AG04449 (cell line): ENCODE measurements at regions of chr17 and their contacts with region 1.

Region 1: GRCh38 chr17:79087428-79088143 is 13.0 kb downstream of the ENGASE start:
- DNase-seq: no peak
- H3K4me3 ChIP-seq: no peak overlapping the region
- CTCF ChIP-seq: peak; percentile 93

Region 2: GRCh38 chr17:79019632-79020584 is 67.7 kb before region 1 on chr17:
- CTCF ChIA-PET with region 1: interaction called, 105 read pairs
- POLR2A ChIA-PET with region 1: no interaction called
- DNase-seq: no peak
- H3K4me3 ChIP-seq: no peak overlapping the region
- CTCF ChIP-seq: peak; percentile 35

Region 3: DNA sequence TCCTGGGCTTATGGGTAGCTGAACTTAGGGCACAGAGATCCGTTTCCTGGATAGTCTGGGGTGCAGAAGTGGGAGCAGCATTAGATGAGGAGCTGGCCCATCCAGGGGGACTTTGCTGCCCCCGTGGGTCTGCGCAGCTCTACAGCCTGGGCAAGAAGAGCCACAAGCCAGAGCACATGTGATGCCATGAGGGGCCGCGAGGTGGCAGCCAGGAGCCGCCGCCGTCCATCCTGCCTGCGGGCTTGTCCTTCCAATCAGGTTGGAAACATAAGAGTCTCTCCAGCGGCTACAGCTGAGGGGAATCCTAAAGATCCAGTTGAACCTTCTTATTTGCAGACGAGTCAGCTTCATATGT is 41.8 kb before region 1 on chr17:
- CTCF ChIA-PET with region 1: interaction called, 80 read pairs
- POLR2A ChIA-PET with region 1: no interaction called
- DNase-seq: no peak
- H3K4me3 ChIP-seq: no peak overlapping the region
- CTCF ChIP-seq: peak; percentile 98

Region 4: DNA sequence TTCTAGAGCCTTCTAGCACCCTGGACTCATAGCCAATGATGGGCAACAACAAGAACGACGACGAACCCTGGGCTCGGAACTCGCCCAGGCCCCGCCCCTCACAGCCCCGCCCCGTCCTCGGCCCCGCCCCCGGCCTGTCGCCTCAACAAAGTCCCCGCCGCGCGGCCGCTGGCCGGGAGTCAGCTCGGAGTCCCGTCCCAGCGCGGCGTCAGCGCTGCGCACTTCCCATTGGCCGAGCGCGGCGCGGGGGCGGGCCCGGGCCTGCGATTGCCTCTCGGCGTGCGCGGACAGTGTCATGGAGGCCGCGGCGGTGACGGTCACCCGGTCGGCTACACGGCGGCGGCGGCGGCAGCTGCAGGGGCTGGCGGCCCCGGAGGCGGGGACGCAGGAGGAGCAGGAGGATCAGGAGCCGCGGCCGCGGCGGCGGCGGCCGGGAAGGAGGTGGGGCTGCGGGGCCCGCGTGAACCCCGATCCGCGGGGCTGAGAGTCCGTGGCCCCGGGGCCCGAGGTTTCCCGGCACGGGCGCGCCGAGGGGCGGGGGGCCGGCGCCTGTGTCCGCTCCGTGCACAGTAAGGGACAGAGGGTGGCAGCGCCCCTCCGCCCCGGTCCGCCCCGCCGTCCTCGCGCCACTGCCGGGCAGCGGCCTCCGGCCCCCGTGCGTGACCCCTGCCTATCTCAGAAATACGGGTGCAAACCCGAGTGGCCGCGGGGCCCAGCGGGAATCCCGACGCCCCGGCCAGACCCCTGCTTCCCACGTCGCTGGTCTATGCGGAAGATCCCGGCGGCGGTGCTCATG is 12.7 kb before region 1 on chr17 and contains the start of gene ENGASE:
- CTCF ChIA-PET with region 1: interaction called, 54 read pairs
- POLR2A ChIA-PET with region 1: no interaction called
- DNase-seq: peak; percentile 14
- H3K4me3 ChIP-seq: peak within 1 kb of the TSS; percentile 65
- CTCF ChIP-seq: no peak

Region 5: GRCh38 chr17:79382322-79382721 is 294.7 kb after region 1 on chr17:
- CTCF ChIA-PET with region 1: interaction called, 473 read pairs
- POLR2A ChIA-PET with region 1: no interaction called
- DNase-seq: no peak
- H3K4me3 ChIP-seq: no peak overlapping the region
- CTCF ChIP-seq: no peak

Region 6: GRCh38 chr17:79707931-79708891 is 620.6 kb after region 1 on chr17:
- CTCF ChIA-PET with region 1: interaction called, 18 read pairs
- POLR2A ChIA-PET with region 1: no interaction called
- DNase-seq: no peak
- H3K4me3 ChIP-seq: peak overlapping the region; percentile 21
- CTCF ChIP-seq: peak; percentile 74